Activated CD4-positive, alpha-beta T cell treated with anti-CD3 and anti-CD28 coated beads for 36 hours (primary cell): ENCODE measurements at regions of chr14 and their contacts with region 1.

Region 1: GRCh38 chr14:99266181-99267178 is 5.5 kb downstream of the BCL11B start:
- DNase-seq: peak; percentile 94
- ATAC-seq: peak; percentile 38
- H3K4me3 Mint-ChIP-seq: peak overlapping the region; percentile 87
- H3K27ac Mint-ChIP-seq: peak overlapping the region; percentile 99
- H3K4me1 Mint-ChIP-seq: peaks cover 37% of the 10 kb centered on the region
- H3K27me3 Mint-ChIP-seq: no peaks in the 10 kb centered on the region

Region 2: GRCh38 chr14:98138666-98139065 is 1127.8 kb before region 1 on chr14:
- CTCF ChIA-PET with region 1: interaction called, 17 read pairs
- POLR2A ChIA-PET with region 1: interaction called, 3 read pairs
- intact Hi-C with region 1: loop called in 1 of 2 experiments (anchors 2 kb)
- DNase-seq: peak; percentile 76
- ATAC-seq: peak; percentile 43
- H3K4me3 Mint-ChIP-seq: peak overlapping the region; percentile 65
- H3K27ac Mint-ChIP-seq: peak overlapping the region; percentile 98
- H3K4me1 Mint-ChIP-seq: peaks cover 87% of the 10 kb centered on the region
- H3K27me3 Mint-ChIP-seq: no peaks in the 10 kb centered on the region

Region 3: DNA sequence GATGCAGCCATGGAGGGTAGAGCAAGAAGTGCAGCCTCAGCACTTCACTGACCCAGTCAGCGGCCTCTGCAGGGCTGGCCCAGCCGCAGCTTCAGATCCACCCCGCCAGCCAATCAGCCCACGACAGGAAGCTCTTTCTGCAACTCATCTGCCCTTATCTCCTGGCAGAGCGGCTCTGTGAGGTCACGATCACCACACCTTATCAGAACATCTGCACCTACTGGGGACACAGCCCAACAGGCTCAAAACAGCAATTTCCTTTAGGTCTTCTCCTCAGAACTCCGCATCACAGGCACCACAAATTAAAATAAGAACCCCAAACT is 281.8 kb before region 1 on chr14:
- CTCF ChIA-PET with region 1: interaction called, 3 read pairs
- POLR2A ChIA-PET with region 1: no interaction called
- intact Hi-C with region 1: loop called in 1 of 2 experiments (anchors 10 kb)
- DNase-seq: peak; percentile 83
- ATAC-seq: peak; percentile 98
- H3K4me3 Mint-ChIP-seq: peak overlapping the region; percentile 58
- H3K27ac Mint-ChIP-seq: peak overlapping the region; percentile 94
- H3K4me1 Mint-ChIP-seq: peaks cover 33% of the 10 kb centered on the region
- H3K27me3 Mint-ChIP-seq: no peaks in the 10 kb centered on the region

Region 4: DNA sequence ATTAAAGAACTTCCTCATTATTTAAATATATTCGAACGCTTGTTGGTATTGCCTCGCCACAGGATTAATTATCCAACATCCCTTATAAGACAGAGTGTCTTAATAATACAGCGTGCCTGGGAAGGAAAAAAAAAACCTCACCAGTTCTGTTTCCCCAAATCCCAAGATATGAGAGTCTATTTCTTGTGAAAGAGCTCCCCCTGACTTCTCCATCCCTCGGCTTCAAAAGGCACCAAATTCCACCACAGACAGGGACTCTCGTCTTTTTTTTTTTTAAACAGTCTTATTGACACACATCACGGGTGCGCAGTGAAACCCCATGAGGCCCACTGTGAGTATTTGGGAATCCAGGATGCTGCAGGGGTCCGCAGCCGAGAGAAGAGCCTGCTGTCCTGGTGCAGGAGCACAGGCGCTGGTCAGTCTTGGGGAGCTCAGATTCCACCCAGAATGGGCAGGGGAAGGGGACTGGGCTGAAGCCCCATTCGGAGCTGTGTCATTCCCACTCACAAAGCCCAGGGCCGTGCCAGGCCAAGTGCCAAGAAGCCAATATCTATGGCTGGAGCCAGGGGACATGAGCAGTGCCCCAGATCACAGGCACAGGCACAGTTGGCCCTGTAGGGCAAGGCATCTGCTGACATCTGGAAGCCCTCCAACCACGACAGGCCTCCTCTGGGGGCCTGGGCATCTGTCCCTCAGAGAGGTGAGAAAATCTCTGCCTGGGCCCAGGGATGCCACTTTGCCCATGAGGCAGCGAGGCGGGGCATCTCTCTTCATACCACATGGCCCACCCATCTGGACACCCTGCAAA is 66.4 kb before region 1 on chr14:
- CTCF ChIA-PET with region 1: interaction called, 11 read pairs
- POLR2A ChIA-PET with region 1: interaction called, 8 read pairs
- intact Hi-C with region 1: no loop called
- DNase-seq: no peak
- ATAC-seq: no peak
- H3K4me3 Mint-ChIP-seq: peak overlapping the region; percentile 44
- H3K27ac Mint-ChIP-seq: peak overlapping the region; percentile 99
- H3K4me1 Mint-ChIP-seq: peaks cover 100% of the 10 kb centered on the region
- H3K27me3 Mint-ChIP-seq: no peaks in the 10 kb centered on the region

Region 5: DNA sequence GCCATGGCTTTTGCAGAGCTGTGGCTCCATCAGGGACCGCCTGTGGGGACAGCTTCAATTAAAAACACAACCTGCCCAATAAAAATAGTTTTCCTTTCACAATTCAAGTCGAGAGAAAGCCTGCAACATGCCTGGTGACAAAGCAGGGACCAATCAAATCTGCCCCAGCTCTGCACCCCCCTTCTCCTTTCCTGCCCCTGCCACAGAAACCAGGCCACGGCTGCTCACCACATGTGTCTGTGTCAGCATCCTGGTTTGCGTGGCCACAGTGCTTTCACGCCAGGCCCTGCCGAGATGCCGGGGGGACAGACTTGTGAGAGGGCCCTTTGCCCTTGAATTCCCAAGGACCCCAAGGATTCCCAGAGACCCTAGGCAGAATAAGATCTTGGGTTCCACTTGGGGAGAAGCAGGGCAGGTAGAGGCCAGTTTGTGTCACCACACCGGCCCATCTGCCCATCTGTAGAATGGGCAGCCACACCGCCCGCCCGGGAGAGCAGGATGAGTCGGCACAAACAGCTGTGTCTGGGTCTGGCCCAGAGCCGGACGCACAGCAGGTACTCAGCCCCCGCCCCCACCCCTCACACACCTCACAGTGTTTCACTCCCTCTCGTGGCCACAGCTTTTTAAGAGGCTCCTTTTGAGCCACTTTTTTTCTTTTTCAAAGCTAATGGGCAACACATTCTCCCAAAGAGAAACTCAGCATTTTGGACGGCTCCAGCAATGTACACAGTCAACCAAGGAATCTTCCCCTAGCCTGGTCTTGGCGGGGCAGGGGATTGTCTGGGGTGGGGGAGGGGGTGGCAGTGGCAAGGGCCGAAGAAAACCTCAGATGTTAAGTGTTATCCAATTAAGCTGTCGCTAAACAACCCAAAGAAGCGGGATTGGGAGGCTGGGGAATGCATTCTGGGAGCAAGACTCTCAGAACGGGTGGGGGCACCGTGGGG is 36.0 kb before region 1 on chr14:
- CTCF ChIA-PET with region 1: interaction called, 17 read pairs
- POLR2A ChIA-PET with region 1: interaction called, 9 read pairs
- intact Hi-C with region 1: loop called (anchors 1 to 5 kb)
- DNase-seq: peak; percentile 91
- ATAC-seq: peak; percentile 55
- H3K4me3 Mint-ChIP-seq: peak overlapping the region; percentile 67
- H3K27ac Mint-ChIP-seq: peak overlapping the region; percentile 88
- H3K4me1 Mint-ChIP-seq: peaks cover 93% of the 10 kb centered on the region
- H3K27me3 Mint-ChIP-seq: no peaks in the 10 kb centered on the region

Region 6: GRCh38 chr14:99252940-99253868 is 13.3 kb before region 1 on chr14:
- CTCF ChIA-PET with region 1: interaction called, 32 read pairs
- POLR2A ChIA-PET with region 1: interaction called, 4 read pairs
- intact Hi-C with region 1: loop called in 1 of 2 experiments (anchors 1 kb)
- DNase-seq: peak; percentile 81
- ATAC-seq: peak; percentile 47
- H3K4me3 Mint-ChIP-seq: peak overlapping the region; percentile 62
- H3K27ac Mint-ChIP-seq: peak overlapping the region; percentile 88
- H3K4me1 Mint-ChIP-seq: peaks cover 98% of the 10 kb centered on the region
- H3K27me3 Mint-ChIP-seq: no peaks in the 10 kb centered on the region

Region 7: GRCh38 chr14:99718031-99718810 is 451.7 kb after region 1 on chr14:
- CTCF ChIA-PET with region 1: no interaction called
- POLR2A ChIA-PET with region 1: no interaction called
- intact Hi-C with region 1: no loop called
- DNase-seq: no peak
- ATAC-seq: no peak
- H3K4me3 Mint-ChIP-seq: no peak overlapping the region
- H3K27ac Mint-ChIP-seq: no peak overlapping the region
- H3K4me1 Mint-ChIP-seq: no peaks in the 10 kb centered on the region
- H3K27me3 Mint-ChIP-seq: peaks cover 9% of the 10 kb centered on the region

Region 8: DNA sequence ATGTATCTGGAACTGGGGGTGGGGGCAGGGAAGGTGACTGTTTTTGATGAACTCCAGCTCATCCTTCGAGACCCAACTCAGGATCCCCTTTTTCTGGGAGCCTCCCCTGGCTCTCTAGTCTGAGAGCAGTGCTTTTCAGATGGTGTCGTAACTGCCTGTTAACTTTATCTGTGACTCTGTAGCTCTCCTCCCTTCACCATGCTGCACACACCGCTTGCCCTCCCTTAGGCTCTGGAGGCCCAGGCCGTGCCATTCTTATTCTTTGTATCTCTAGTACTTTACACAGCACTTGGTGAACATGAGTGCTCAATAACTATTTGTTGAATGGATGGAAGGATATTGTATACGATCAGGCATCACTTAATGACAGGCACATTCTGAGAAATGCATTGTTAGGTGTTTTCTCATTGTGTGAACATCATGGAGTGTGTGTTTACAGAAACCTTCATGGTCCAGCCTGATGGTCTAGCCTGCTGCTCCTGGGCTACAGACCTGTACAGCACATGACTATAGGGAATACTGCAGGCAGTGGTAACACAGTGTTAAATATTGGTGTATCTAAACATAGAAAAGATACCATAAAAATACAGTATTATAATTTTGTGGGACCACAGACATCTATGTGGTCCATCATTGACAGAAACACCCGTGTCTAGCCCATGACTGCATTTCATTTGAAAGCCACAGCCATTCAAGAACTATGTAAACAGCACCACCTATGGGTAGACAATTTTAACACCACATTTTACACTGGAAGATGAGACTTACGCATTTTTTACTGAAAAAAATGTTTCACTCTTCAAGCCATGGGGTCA is 618.6 kb after region 1 on chr14:
- CTCF ChIA-PET with region 1: no interaction called
- POLR2A ChIA-PET with region 1: no interaction called
- intact Hi-C with region 1: no loop called
- DNase-seq: no peak
- ATAC-seq: peak; percentile 73
- H3K4me3 Mint-ChIP-seq: no peak overlapping the region
- H3K27ac Mint-ChIP-seq: no peak overlapping the region
- H3K4me1 Mint-ChIP-seq: no peaks in the 10 kb centered on the region
- H3K27me3 Mint-ChIP-seq: peaks cover 6% of the 10 kb centered on the region